ENCODE measurements at regions of chr1 and their contacts with region 1.

Region 1: DNA sequence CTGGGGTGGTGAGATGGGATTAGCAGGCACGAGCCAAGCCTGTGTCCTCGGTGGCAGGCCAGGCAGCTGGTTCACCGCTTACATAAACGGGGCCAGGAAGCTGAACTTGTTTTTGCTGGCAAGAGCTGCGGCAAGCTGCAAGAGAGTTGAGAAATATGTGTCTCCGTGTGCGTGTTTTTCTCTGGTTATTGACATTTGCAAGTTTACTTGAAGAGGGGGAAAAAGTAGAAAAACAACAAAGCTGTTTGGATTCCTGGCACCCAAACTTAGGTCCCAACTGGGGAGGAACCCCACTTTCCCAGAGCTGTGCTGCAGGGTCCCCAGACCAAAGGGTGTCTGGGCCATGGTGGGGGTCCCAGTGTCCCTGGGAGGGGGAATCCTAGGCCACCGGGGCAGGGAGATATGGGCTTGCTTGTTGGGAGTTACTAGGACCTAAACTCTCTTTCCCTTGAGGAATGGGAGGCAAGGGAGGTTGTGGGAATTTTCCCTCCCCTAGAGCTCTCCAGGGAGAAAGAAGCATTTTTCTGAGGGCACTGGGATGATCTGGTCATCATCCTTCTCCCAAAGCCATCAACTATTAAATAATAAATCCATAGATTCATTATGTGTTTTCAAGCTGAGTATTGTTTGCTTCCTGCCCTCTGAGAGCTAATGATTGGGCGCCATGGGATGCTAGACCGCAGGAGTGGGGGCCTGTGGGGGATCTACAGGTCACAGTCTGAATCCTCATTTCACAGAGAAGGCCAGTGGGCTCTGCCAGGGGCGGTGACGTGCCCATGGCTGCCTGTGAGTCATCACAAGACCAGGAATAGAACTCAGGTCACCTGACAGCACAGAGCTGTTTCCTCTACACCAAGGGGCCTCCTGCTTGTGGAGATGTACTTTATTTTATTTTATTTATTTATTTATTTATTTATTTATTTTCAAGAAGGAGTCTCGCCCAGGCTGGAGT is 14.8 kb downstream of the IL6R start:
- H3K4me3 ChIP-seq: no peak overlapping the region
- H3K27ac ChIP-seq: peak overlapping the region; percentile 43; the same call in 1 of the 2 replicates
- H3K4me1 ChIP-seq: peaks cover 21% of the 10 kb centered on the region
- CTCF ChIP-seq: no peak

Region 2: DNA sequence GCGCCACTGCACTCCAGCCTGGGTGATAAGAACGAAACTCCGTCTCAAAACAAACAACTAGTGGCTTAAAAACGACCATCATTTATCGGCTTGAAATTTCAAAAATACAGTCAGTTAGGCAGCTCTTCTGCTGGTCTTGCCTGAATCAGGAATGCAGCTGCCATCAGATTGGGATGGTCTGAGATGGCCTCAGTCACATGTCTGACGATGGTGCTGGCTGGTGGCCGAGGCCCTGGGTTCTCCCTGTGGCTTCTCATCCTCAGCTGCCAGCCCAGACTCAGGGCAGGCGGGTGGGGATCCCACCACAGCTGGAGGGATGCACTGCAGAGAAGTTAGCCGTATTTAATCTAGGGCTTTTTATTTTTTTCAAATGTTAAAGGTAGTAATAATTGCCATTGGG is 16.5 kb after region 1 on chr1:
- CTCF ChIA-PET with region 1: interaction called, 4 read pairs
- POLR2A ChIA-PET with region 1: interaction called, 10 read pairs
- H3K4me3 ChIP-seq: no peak overlapping the region
- H3K27ac ChIP-seq: no peak overlapping the region
- H3K4me1 ChIP-seq: no peaks in the 10 kb centered on the region
- CTCF ChIP-seq: no peak

Region 3: DNA sequence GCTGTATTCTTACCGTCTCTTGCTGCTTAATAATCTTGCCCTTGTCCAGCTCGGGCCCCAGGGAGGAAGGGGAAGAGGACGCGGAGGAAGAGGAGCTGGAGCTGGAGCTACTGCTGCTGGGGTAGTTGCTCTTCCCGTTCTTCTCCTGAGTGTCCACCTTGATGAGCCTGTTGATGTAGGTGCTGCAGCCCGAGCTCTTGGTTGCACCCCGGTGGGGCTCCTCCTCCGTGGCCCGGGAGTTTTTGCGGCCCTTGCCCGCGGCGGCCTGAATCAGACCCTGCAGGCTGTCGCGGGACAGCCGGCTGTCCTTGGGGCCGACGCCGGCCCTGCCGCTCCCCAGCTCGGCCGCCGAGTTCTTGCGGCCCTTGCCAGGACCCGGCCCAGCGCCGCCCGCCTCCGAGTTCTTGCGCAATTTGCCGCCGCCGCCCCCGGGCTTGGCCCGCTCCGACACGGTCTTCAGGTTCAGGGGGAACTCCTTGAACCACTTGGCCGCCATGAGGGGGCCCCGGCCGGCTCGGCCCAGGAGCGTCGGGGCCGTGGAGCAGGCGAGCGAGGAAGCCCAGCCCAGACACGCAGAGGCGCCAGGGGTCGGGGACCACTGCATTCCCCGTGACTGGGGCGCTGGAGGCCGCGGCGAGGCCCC is 81.6 kb after region 1 on chr1:
- CTCF ChIA-PET with region 1: no interaction called
- POLR2A ChIA-PET with region 1: no interaction called
- H3K4me3 ChIP-seq: no peak overlapping the region
- H3K27ac ChIP-seq: no peak overlapping the region; the same call in 1 of the 2 replicates
- H3K4me1 ChIP-seq: no peaks in the 10 kb centered on the region
- CTCF ChIP-seq: no peak